Right ventricle myocardium superior (tissue), 1 donor: ENCODE measurements at regions of chr10 and their contacts with region 1.

Region 1: GRCh38 chr10:75379817-75380216 is 21.7 kb downstream of the ZNF503 start:
- DNase-seq: no peak
- ATAC-seq: no peak

Region 2: DNA sequence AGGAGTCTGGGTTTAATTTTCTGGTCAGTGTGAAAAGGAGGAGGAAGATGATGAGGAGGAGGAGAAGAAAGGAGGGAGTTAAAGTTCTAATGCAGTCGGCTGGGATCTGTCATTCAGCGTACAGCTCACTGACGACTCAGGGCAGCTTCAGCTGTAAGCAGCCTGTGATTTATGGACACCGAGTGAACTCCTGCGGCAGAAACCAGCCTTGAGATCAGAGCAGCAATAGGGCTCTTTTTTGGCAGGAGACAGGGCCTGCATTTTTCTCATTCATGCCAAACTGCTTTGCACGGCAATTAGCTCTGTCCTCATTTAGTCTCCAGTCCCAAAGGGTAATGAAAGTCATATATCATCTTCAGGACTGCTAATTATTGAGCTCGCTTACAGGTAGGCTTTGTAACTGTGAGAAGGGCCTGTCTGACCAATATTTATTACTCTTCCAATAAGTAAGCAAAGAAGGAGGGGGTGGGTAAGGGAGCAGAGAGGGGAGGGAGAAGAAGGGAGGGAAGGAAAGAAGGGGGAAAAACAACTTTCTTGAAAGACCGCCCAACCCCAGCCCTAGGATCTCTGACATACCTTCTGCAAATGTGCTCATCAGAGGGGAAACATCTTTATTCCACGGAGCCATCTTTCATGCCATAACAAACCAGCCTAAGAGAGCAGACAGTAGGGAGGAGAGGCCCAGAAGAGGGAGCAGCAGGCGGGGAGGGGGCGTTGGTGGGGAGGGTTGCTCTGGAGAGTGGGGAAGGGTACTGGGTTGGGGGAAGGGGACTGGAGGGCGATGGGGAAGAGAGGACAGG is 95.9 kb before region 1 on chr10:
- intact Hi-C with region 1: loop called (anchors 10 kb)
- DNase-seq: no peak
- ATAC-seq: peak; percentile 84